Common myeloid progenitor, CD34-positive (primary cell): ENCODE measurements at regions of chr1 and their contacts with region 1.

Region 1: GRCh38 chr1:230104395-230105244 is 37.6 kb downstream of the GALNT2 start:
- DNase-seq: peak; percentile 92 to 97 (median 96)
- H3K4me3 ChIP-seq: peak overlapping the region in 5 of 7 experiments; percentile 1 to 59 (median 35)
- H3K27ac ChIP-seq: no peak overlapping the region
- H3K4me1 ChIP-seq: peaks cover 5 to 60% (median 36%) of the 10 kb centered on the region in 4 experiments
- H3K27me3 ChIP-seq: no peaks in the 10 kb centered on the region

Region 2: GRCh38 chr1:229900220-229900619 is 204.4 kb before region 1 on chr1:
- CTCF ChIA-PET with region 1: no interaction called
- POLR2A ChIA-PET with region 1: no interaction called
- DNase-seq: no peak
- H3K4me3 ChIP-seq: no peak overlapping the region
- H3K27ac ChIP-seq: no peak overlapping the region
- H3K4me1 ChIP-seq: peaks cover 0 to 4% (median 0%) of the 10 kb centered on the region in 4 experiments
- H3K27me3 ChIP-seq: no peaks in the 10 kb centered on the region

Region 3: DNA sequence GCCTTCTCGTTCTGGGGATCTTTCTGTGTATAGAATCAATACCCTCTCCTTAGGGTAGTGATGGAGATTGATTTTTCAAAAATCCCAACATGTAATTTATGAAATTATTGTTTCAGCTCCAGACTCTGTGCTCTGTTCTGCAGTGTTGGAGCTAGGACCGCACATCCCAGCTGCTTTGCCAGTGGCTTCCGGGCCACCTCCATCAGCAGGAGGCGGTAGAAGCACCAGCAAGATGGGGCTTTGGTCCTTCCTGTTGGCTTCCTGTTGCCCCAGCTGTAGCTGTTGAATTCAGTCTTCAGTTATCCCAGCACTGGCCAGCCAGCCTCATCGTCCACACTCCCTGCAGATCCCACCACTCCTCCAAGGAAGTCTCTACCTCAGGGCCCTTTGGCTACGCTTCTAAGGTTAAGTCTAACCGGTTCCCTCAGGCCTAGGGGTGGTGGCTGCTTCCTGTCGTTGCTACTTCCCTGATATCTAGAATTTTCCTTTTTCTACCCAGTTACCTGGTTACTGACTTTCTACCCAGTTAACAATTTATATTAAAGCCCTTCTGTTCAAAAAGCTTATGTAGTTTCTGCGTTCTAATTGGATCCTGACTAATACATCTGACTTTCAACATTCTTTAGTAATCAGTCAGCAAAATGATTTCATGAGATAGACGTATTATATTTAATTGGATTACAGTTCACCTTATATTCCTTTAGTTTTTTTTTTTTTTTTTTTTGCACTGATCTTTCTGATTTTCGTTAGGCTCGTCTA is 13.0 kb before region 1 on chr1:
- CTCF ChIA-PET with region 1: interaction called, 18 read pairs
- POLR2A ChIA-PET with region 1: interaction called, 3 read pairs
- DNase-seq: no peak
- H3K4me3 ChIP-seq: no peak overlapping the region
- H3K27ac ChIP-seq: no peak overlapping the region
- H3K4me1 ChIP-seq: peaks cover 0 to 8% (median 4%) of the 10 kb centered on the region in 4 experiments
- H3K27me3 ChIP-seq: no peaks in the 10 kb centered on the region